ENCODE measurements at regions of chr7 and their contacts with region 1.

Region 1: DNA sequence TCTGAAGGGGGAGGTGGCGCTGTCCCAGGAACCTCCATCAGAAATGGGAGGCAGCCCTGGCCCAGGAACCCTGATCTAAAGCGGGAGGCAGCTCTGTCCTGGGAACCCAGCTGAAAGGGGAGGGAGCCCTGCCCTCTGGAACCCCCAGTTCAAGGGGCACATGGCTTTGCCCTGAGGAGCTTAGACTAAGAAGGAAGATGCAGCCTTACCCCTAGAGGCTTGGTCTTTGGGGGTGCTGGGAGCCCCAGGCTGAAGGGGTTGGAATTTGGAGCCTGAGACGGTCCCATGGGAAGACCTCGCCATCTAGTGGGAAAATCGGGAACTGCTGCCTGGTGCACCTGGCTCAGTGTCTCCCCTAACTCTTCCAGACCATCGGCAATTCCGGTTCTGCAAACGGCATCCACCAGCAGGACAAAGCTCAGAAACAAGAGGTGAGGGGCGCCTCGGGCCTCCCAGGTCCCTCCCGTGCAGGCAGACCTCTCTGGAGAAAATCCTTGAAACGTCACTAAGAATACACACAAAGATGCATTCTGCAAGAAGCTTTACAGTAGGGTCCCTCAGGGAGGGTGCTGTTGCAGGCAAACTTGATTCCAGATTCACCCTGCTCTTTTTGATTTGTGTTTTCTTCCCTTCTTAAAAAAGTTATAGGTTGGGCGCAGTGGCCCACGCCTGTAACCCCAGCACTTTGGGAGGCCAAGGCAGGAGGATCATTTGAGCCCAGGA is 52.4 kb upstream of the GTF2IRD1 start:
- DNase-seq: peak; percentile 82 to 97
- H3K4me3 ChIP-seq: no peak overlapping the region
- H3K27ac ChIP-seq: no peak overlapping the region
- H3K4me1 ChIP-seq: peaks cover 0 to 5% (median under 1%) of the 10 kb centered on the region in 4 experiments; a peak in 3 of 7 replicates
- H3K27me3 ChIP-seq: no peaks in the 10 kb centered on the region
- CTCF ChIP-seq: peak; percentile 92 to 98 (median 97)
- EP300 ChIP-seq: no peak
- POLR2A ChIP-seq: no peak
- RAD21 ChIP-seq: peak; percentile 94

Region 2: GRCh38 chr7:74223711-74224510 is 177.4 kb before region 1 on chr7:
- CTCF ChIA-PET with region 1: interaction called, 10 read pairs
- POLR2A ChIA-PET with region 1: interaction called, 3 read pairs
- DNase-seq: no peak
- H3K4me3 ChIP-seq: no peak overlapping the region
- H3K27ac ChIP-seq: no peak overlapping the region; the same call in 1 of the 2 replicates
- H3K4me1 ChIP-seq: peaks cover 0 to 2% (median 0%) of the 10 kb centered on the region in 4 experiments; a peak in 3 of 7 replicates
- H3K27me3 ChIP-seq: no peaks in the 10 kb centered on the region
- CTCF ChIP-seq: no peak
- EP300 ChIP-seq: no peak
- POLR2A ChIP-seq: no peak
- RAD21 ChIP-seq: no peak

Region 3: DNA sequence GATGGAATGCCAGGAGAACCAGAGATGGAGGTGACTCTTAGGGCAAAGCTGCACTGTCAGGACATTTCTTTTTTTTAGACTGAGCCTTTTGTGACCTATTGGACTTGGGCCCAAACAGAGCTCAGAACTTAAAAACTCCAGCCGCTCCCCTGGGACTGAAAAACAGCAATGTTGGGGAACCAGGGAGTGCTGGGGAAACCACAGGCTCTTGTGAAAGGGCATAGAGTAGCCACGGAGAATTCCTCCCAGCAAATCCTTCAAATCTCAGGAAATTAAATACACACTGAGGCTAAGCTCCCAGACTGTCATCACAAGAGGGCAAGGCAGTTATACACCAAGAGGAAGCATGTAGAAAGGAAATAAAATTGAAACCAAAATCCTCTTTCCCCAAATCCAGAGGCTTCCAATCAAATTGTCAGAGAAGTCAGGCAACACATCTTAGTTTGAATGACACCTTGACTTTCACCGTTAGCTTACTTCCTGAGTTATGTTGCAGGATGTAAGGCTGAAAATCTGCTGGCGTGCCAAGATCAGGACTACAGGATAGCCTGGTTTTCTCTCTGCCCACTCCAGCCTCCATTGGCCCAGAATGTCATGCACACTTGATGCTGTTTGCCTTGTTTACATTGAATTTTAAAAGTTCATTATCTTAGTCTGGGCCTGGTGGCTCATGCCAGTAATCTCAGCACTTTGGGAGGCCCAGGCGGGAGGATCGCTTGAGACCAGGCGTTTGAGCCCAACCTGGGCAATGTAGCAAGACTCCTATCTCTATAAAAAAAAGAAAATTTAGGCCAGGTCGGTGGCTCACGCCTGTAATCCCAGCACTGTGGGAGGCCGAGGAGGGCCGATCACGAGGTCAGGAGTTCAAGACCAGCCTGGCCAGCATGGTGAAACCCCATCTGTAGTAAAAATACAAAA is 144.5 kb before region 1 on chr7:
- CTCF ChIA-PET with region 1: interaction called, 17 read pairs
- POLR2A ChIA-PET with region 1: interaction called, 3 read pairs
- DNase-seq: no peak
- H3K4me3 ChIP-seq: no peak overlapping the region
- H3K27ac ChIP-seq: no peak overlapping the region; the same call in 1 of the 2 replicates
- H3K4me1 ChIP-seq: peaks cover 0 to 5% (median 3%) of the 10 kb centered on the region in 4 experiments; a peak in 4 of 7 replicates
- H3K27me3 ChIP-seq: no peaks in the 10 kb centered on the region
- CTCF ChIP-seq: no peak
- EP300 ChIP-seq: no peak
- POLR2A ChIP-seq: no peak
- RAD21 ChIP-seq: no peak

Region 4: DNA sequence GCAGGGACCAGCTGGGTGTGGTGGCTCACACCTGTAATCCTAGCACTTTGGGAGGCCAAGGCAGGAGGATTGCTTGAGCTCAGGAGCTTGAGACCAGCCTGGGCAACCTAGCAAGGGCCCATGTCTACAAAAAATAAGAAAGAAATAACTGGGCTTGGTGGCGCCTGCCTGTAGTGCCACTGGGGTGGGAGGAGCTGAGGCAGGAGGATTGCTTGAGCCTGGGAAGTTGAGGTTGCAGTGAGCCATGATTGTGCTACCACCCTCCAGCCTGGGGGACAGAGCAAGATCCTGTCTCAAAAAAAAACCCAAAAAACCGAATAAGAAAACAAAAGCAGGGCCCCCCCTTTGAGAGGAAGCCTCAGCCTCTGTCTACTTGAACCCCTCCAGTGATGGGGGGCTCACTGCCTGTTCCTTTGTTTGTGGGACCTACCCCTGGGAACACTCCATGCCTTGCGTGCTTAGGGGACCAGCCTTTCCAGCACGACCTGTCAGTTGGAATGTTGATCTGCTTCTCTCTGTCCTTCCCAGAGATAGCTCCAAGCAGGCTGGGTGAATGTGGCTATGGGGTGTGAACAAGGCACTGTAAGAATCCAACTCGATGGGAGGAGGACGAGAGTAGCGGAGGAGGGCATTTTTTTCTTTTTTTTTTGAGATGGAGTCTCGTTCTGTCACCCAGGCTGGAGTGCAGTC is 104.0 kb before region 1 on chr7:
- CTCF ChIA-PET with region 1: interaction called, 18 read pairs
- POLR2A ChIA-PET with region 1: no interaction called
- DNase-seq: no peak
- H3K4me3 ChIP-seq: no peak overlapping the region
- H3K27ac ChIP-seq: no peak overlapping the region
- H3K4me1 ChIP-seq: peaks cover 9 to 17% (median 14%) of the 10 kb centered on the region in 4 experiments
- H3K27me3 ChIP-seq: no peaks in the 10 kb centered on the region
- CTCF ChIP-seq: no peak
- EP300 ChIP-seq: no peak
- POLR2A ChIP-seq: no peak
- RAD21 ChIP-seq: no peak

Region 5: DNA sequence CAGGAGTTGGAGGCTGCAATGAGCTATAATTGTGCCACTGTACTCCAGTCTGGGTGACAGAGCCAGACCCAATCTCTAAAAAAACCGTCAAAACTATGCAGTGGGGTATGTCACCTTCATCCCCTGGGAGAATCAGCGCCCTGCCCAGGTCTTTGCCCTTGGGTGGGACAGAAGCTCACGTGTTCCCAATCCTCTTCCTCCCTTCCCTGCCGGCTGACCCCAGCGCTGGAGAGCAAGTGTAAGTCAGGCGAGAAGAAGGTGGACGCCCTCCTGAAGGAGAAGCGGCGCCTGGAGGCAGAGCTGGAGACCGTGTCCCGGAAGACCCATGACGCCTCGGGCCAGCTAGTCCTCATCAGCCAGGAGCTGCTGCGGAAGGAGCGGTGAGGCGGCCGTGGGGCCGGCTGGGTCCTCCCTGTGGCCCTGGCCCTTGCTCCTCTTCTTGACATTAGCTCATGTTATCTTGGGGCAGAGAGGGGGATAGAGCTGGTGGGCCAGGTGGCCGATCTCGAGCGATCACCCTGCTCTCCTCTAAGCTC is 12.3 kb before region 1 on chr7:
- CTCF ChIA-PET with region 1: interaction called, 37 read pairs
- POLR2A ChIA-PET with region 1: interaction called, 4 read pairs
- DNase-seq: no peak
- H3K4me3 ChIP-seq: no peak overlapping the region
- H3K27ac ChIP-seq: no peak overlapping the region
- H3K4me1 ChIP-seq: peaks cover 0 to 3% (median 0%) of the 10 kb centered on the region in 4 experiments; a peak in 1 of 7 replicates
- H3K27me3 ChIP-seq: no peaks in the 10 kb centered on the region
- CTCF ChIP-seq: no peak
- EP300 ChIP-seq: no peak
- POLR2A ChIP-seq: no peak
- RAD21 ChIP-seq: no peak

Region 6: DNA sequence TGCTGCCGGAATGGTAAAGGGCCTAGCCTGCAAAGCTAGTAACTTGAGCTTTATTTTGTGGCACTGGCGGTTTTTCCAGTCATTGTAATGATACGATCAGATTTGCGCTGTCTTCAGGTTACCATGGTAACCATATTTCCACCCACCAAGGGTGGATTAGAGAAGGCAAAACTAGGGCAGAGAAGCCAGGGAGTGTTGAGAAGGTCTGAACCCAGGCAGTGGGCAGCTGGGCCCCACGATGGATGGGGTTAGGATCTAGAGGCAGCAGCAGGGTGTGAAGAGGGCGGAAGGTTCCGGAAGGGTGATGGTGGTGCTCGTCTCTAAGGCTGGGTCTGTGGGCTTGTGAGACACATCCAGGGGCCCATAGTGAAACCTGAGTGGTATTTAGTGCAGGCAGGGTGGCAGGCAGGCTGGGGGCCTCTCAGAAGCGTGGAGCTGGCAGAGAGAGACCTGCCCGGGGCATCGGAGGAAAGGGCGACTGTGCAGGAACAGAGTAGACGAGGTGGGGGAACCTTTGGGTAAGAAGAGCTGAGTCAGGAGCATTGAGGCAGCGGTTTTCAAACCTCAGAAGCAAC is 168.3 kb after region 1 on chr7:
- CTCF ChIA-PET with region 1: interaction called, 29 read pairs
- POLR2A ChIA-PET with region 1: no interaction called
- DNase-seq: no peak
- H3K4me3 ChIP-seq: no peak overlapping the region
- H3K27ac ChIP-seq: no peak overlapping the region
- H3K4me1 ChIP-seq: 0 out of 7 replicates have a peak, but pooled peaks cover 0 to 5% (median 0%) of the 10 kb centered on the region in 4 experiments
- H3K27me3 ChIP-seq: no peaks in the 10 kb centered on the region
- CTCF ChIP-seq: no peak
- EP300 ChIP-seq: no peak
- POLR2A ChIP-seq: no peak
- RAD21 ChIP-seq: no peak

Measured in H1 (cell line).